ENCODE measurements at regions of chr7 and their contacts with region 1.

Region 1: GRCh38 chr7:131688738-131689661 is 132.6 kb upstream of the PODXL start:
- DNase-seq: peak; percentile 50 to 84
- H3K4me3 ChIP-seq: no peak overlapping the region
- H3K4me1 ChIP-seq: 0 out of 2 replicates have a peak, but pooled peaks cover 2% of the 10 kb centered on the region
- H3K27me3 ChIP-seq: peaks cover 42% of the 10 kb centered on the region

Region 2: DNA sequence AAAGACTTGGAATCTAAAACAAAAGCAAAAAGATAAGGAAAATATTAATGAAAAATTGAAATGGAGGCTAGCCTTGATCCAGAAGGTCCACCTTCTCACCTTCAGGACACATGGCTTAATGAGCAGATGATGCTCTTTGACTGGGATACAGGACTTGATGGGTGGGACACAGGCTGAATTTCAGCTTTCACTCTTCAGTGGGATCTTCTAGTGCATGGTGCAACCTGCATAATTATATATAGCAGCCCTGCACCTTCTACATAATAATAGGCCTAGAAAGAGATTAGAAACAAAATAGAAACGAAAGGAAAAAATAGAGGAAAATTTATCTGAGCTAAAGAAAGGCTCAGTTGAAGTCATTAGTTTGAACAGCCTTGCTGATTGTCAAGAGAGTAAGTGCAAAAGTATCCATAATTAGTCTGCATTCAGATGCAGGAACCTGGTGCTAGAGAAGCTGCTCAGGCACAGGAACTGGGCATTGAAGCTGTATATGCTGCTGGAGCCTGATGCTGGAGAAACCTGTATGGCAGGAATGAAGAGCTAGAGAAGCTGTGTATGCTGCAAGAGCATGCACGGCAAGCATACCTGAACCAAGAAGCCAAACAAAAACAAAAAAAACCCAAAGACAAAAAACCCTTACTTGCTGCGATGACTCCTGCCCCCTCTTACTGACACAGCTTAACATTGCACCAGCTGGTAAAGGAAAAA is 342.0 kb before region 1 on chr7:
- in situ Hi-C with region 1: no loop called
- DNase-seq: peak; percentile 68 to 94
- H3K4me3 ChIP-seq: no peak overlapping the region
- H3K4me1 ChIP-seq: peaks cover 35% of the 10 kb centered on the region
- H3K27me3 ChIP-seq: no peaks in the 10 kb centered on the region

Region 3: DNA sequence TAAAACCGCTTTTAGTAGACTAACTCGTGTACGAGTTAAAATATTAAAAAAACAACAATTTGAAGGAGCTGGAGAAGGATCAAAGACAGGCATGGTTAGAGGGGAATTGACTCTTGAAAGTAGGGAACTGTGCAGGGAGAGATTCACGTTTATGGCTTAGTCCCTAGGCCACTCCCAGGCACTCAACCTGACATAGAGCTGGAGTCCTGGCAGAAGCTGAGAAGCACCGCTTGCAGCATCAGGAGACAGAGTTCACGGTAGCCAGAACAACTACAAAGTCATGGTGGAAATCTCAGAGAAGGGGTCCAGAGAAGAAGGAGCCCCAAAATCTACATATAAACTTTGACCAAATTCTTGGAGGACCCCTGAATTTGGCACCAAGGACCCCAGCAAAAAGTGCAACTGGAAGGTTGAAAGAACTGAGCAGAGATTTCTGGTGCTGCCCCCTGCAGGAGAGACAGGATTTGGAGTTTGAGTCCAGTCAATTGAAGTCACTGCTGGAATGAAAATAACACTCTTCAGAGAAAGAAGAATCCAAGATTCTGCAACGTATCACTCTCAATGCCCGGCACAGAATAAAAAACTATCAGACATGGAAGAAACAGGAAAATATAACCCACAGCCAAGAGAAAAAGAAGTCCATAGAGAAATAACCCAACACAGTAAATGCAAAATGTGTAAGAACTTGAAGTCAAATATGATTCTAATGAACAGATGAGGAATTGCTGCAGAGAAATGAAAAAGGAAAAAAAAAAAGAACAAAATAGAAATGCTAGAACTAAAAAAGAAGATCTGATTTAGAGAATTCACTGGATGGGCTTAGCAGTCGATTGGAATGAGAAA is 360.7 kb after region 1 on chr7:
- in situ Hi-C with region 1: loop called (anchors 10 kb)
- DNase-seq: peak in 1 of 2 experiments; percentile 66
- H3K4me3 ChIP-seq: no peak overlapping the region
- H3K4me1 ChIP-seq: no peaks in the 10 kb centered on the region
- H3K27me3 ChIP-seq: no peaks in the 10 kb centered on the region